PC-9 (cell line): ENCODE measurements at regions of chr4 and their contacts with region 1.

Region 1: DNA sequence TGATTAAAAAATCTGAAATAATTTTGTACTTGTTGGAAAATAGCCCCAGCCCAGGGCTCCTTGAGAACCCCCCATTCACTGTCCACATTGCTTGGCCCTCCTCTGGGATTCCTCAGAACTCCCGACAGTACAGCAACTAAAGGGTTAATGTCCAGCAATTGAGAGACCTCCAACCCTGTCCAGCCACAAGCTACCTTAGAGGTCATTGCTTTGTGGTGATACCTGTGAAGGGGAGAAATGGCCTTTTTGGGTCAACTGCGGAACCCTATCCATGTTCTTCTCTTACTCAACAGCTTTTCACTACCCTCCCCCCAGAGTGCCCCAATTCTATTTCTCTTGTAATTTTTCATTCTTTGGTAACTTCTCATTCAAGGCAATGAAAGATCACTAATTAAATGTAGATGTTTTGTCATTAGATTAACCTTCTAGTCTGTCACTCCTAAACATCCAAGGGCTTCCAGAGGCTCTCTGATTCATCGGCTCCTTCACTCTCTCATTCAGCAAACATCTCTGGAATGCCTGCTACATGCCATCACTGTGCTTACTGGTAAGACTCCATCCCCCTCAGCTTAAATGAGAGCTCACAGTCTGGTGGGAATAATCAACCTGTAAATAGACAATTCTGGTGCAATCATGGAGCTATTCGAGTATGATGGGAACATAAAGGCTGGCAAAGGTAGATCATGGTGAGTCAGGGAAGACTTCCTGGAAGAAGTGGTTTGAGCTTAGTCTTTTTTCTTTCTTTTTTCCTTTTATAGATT is 241.4 kb upstream of the PGRMC2 start:
- DNase-seq: peak; percentile 65 to 97
- H3K4me3 ChIP-seq: no peak overlapping the region
- H3K27ac ChIP-seq: peak overlapping the region; percentile 80
- H3K4me1 ChIP-seq: peaks cover 60% of the 10 kb centered on the region
- H3K27me3 ChIP-seq: no peaks in the 10 kb centered on the region
- CTCF ChIP-seq: no peak

Region 2: DNA sequence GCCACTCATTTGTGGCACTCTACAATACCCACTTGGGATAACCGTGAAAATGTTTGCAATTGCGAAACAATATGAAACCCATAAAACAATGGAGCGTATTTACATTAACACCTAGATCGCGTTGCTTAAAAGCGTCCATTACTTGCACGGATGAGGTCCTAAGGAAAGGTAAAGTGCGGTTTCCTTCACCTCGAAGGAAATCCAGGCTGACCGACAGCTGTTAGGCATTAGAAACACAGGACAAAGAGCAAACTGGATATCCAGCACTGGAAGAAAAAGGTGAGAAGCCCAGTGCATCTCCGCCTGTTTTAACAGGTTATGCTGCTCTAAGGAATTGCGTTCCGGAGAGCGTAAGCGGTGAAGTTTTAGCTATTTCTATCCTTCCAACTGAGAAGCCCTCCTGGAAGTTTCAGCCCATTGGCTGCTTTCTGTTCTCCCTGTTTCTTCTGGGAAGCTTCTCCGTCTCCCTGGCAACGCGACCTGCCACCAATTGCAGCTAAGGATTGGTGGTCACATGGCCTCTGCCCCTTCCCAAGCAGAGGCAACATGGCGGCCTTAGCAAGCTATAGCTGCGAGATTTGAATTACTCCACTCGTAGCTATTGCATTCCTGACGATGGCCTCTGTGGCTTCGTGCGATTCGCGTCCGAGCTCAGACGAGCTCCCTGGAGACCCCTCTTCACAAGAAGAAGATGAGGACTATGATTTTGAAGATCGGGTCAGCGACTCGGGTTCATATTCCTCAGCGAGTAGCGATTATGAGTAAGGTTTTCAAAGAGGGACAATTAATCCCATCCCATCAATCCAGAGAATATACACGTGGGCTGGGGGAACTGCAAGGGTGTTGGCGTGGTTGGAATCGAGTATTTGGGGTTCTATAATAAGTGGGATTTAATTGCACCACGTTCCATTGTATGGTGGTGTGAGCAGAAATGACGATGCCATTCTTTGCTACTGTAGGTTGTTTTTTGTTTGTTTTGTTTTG is 896.3 kb before region 1 on chr4 and contains the start of gene INTU:
- CTCF ChIA-PET with region 1: no interaction called
- POLR2A ChIA-PET with region 1: no interaction called
- intact Hi-C with region 1: loop called (anchors 5 kb)
- DNase-seq: peak; percentile 89 to 98
- H3K4me3 ChIP-seq: peak within 1 kb of the TSS; percentile 67
- H3K27ac ChIP-seq: peak within 1 kb of the TSS; percentile 44
- H3K4me1 ChIP-seq: peaks cover 26% of the 10 kb centered on the region
- H3K27me3 ChIP-seq: no peaks in the 10 kb centered on the region
- CTCF ChIP-seq: no peak
- total RNA-seq, gene INTU: 9.7 and 10.5 TPM in 2 replicates

Region 3: DNA sequence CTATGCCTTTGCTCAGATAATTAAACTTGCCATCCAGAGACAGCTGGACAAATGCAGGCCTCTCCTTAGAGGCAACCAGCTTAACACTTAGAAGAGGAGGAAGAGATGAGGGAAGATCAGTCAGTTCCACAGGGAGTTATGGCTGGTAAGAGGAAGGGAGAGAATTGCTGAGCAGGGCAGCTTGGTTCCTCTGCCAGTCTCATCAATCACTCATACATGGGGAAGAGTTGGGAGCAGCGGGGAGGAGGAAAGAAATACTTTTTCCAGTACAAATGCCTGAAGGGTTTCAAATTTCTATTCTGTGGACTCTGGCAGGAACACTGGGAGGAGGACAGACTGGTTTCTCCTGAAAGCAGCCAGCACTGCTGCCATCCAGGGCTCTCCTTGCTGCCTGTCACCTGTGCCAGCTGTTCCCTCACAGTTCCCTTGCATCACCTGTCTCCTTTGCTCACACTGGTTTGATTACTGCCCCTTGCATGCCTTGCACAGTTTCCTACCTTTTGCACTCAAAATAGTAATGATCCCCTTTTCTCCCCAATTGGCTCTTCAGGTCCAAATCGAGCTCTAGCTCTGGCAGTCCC is 300.9 kb before region 1 on chr4:
- CTCF ChIA-PET with region 1: no interaction called
- POLR2A ChIA-PET with region 1: no interaction called
- intact Hi-C with region 1: loop called (anchors 5 kb)
- DNase-seq: peak; percentile 73 to 76
- H3K4me3 ChIP-seq: no peak overlapping the region
- H3K27ac ChIP-seq: peak overlapping the region; percentile 51
- H3K4me1 ChIP-seq: peaks cover 17% of the 10 kb centered on the region
- H3K27me3 ChIP-seq: no peaks in the 10 kb centered on the region
- CTCF ChIP-seq: no peak

Region 4: GRCh38 chr4:128338634-128339355 is 190.2 kb before region 1 on chr4:
- CTCF ChIA-PET with region 1: no interaction called
- POLR2A ChIA-PET with region 1: no interaction called
- intact Hi-C with region 1: loop called (anchors 5 kb)
- DNase-seq: peak; percentile 50 to 86
- H3K4me3 ChIP-seq: no peak overlapping the region
- H3K27ac ChIP-seq: peak overlapping the region; percentile 57
- H3K4me1 ChIP-seq: peaks cover 25% of the 10 kb centered on the region
- H3K27me3 ChIP-seq: no peaks in the 10 kb centered on the region
- CTCF ChIP-seq: no peak

Region 5: GRCh38 chr4:128379860-128380259 is 149.1 kb before region 1 on chr4:
- CTCF ChIA-PET with region 1: no interaction called
- POLR2A ChIA-PET with region 1: no interaction called
- intact Hi-C with region 1: no loop called
- DNase-seq: peak in 1 of 2 experiments; percentile 46
- H3K4me3 ChIP-seq: no peak overlapping the region
- H3K27ac ChIP-seq: no peak overlapping the region
- H3K4me1 ChIP-seq: no peaks in the 10 kb centered on the region
- H3K27me3 ChIP-seq: no peaks in the 10 kb centered on the region
- CTCF ChIP-seq: peak; percentile 64

Region 6: GRCh38 chr4:128553686-128554515 is 24.9 kb after region 1 on chr4:
- CTCF ChIA-PET with region 1: no interaction called
- POLR2A ChIA-PET with region 1: interaction called, 8 read pairs
- intact Hi-C with region 1: loop called (anchors 2 kb)
- DNase-seq: peak in 1 of 2 experiments; percentile 57
- H3K4me3 ChIP-seq: peak overlapping the region; percentile 64
- H3K27ac ChIP-seq: peak overlapping the region; percentile 81
- H3K4me1 ChIP-seq: peaks cover 16% of the 10 kb centered on the region
- H3K27me3 ChIP-seq: no peaks in the 10 kb centered on the region
- CTCF ChIP-seq: no peak

Region 7: DNA sequence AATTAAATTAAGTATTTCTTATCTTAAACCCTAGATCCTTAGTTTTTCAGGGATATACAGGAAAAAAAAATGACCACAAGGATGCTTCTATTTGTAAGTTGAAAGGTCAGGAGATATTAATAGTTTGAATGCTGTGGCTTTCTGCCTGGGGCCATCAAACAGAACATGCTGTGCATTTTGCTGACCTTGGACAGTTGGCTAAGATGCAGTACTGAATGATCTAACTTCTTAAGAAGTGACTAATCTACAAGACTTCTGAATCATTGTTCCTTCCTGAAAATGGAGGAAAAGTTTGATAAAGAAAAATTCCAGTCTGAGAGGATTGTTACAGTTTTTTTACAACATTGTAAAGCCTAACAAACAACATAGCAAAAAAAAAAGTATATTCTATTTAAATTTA is 42.8 kb after region 1 on chr4:
- CTCF ChIA-PET with region 1: no interaction called
- POLR2A ChIA-PET with region 1: no interaction called
- intact Hi-C with region 1: loop called (anchors 2 kb)
- DNase-seq: peak; percentile 50 to 90
- H3K4me3 ChIP-seq: no peak overlapping the region
- H3K27ac ChIP-seq: no peak overlapping the region
- H3K4me1 ChIP-seq: peaks cover 20% of the 10 kb centered on the region
- H3K27me3 ChIP-seq: no peaks in the 10 kb centered on the region
- CTCF ChIP-seq: no peak